Posterior vena cava (tissue), 2 donors: ENCODE measurements at regions of chr12 and their contacts with region 1.

Region 1: DNA sequence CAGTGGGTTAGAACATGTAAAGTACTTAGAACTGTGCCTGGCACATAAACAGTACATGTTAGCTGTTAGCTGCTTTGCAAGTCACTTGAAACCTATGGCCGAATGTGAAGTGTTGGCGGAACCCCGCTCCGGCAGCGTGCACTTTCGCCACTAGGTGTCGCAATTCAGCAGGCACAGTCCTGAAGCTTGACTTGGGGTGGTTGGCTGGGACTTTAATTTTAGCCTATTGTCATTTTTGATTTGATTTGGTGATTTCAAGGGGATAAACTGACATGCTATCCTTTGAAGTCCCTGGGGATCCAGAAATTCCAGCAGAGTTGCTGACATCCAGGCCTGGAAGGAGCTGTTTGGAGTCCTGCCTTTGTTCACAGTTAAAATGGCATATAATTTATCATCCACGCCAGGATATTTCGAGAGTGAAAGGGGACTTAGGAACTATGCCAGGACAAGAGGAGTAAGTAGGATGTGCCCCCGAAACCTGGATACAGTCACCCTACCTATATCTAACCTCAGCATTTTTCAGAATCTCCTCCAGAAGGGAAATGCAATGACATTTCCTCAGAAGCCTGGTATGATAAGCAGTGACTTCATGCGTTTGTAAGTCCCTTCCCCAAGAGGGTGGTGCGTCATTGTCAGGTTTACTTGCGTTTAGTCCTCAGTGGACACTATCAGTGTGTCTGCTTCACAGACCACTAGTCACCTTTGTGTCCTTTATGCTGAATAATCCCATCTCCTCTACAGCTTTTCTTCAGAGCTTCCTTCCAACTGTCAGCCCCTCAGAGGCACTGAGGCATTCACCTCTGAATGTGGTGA is 3.5 kb upstream of the TSPAN9 start:
- DNase-seq: peak; percentile 94

Region 2: DNA sequence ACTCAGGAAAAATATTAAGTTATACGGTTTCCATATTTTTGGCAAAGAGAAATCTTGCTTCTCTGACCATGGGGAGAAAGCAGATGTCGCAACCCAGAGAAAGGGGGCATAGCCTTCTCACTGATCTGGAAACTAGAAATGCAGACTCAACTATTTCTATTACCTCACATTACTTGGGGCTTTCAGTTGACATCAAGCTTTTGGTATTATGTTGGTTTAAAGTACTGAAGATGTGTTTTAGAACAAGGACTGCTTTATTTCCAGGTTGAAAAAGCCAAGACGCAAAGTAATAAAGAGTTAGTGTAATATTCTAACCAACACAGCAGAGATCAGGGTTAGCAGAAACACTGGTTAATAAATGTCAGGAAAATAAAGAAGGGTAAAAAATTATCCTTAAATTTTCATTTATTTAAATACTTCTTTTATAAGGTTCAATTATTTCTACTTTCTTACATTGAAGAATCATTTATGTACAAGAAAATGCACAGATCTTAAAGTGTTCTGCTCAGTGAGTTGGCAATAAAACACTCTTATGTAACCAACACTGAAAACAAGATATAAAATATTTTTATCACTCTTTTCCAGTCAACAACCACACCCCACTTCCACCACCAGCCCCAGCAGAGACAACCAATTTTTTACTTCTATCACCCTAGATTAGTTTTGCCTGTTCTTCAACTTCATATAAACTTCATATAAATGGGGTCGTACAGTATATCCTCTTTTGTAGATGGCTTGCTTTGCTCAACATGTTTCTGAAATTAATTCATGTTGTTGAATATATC is 1095.4 kb before region 1 on chr12:
- intact Hi-C with region 1: no loop called
- DNase-seq: no peak

Region 3: DNA sequence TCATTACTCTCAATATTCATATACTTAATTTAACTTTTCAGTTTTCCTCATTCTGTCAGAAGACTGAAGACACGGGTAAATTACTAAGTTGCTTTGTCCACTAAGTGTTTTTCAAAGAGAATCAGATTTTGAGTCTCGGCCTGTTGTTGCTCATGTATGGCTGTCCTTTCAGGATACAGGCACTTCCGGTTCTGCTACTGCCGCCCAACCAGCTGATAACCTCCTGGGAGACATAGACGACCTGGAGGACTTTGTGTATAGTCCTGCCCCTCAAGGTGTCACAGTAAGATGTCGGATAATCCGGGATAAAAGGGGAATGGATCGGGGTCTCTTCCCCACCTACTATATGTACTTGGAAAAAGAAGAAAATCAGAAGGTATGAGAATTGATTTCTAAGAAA is 142.8 kb before region 1 on chr12:
- intact Hi-C with region 1: no loop called
- DNase-seq: no peak

Region 4: GRCh38 chr12:3119748-3120601 is 46.3 kb after region 1 on chr12:
- intact Hi-C with region 1: loop called in 1 of 2 experiments (anchors 5 kb)
- DNase-seq: no peak

Region 5: GRCh38 chr12:3186546-3187215 is 113.0 kb after region 1 on chr12:
- intact Hi-C with region 1: no loop called
- DNase-seq: no peak

Region 6: GRCh38 chr12:3202734-3203446 is 129.2 kb after region 1 on chr12:
- intact Hi-C with region 1: loop called in 1 of 2 experiments (anchors 5 kb)
- DNase-seq: no peak

Region 7: DNA sequence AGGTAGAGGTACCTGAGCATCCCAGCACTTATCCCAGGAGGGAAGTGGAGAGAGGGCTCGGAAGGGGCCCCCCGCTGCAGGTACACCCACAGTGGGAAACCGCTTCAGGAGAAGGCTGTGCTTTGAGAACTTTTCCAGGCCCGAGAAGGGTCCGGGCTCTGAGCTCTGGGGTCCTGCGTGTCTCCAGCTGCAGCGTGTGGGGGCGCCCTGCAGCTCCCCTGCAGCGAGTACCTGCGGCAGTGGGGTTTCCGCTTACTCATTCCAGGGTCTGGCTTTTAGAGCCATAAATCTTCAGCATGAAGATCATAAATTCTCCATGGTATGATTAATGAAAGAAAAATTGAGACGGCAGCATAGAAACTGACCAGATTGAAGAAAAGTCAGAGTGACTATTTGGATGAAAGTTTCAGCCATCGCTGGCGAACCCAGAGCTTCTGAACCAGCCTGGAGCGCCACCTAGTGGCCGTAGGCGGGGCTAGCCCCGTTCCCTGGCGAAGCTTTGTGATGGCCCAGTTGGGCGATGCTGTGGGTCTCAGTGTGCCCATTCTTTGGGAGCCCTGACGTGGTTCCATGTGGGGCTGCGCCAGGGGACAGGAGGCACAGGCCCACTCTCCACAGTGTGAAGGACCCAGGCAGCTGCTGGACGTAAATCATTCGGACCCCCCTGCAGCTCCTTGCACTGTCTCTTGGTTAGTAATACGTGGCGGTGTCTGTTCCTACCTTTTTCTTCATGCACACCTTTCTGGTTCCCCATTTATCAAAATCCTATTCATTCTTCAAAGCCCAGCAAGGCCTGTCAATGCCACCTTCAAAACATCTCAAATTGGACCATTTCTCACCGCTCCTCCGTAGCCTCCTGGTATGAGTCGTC is 201.8 kb after region 1 on chr12:
- intact Hi-C with region 1: loop called (anchors 5 to 10 kb)
- DNase-seq: peak; percentile 92